IMR-90 (cell line): ENCODE measurements at regions of chr19 and their contacts with region 1.

Region 1: DNA sequence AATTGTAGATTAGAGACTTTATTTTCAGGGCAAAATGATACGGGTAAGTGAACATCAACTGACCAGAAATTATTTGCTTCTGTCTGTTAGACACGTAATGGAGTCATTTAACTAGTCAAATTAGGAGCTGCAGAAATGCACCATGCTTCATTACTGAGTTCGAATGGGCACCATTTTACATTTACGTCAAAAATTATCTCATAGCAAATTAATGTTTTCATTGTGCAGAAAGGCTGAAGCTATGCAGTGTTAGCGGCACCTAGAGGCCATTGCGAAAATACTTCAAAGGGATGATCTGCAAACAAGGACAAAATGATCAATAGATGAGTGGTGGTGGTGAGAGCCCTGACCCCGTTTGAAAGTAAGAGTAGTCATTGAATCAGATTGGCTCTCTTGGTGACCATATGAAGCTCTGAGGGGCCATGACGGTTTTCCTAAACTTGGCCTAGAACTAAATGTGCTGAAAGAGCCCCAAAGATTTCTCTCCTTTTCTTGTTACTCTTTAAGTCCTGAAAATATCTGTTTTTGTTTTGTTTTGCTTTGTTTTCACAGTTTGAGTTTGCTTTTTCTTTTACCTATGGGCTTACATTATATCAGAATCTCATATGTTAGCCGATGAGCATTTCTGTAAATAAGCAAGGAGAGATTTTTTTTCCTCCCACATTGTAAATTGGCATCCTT is 277.9 kb downstream of the ZNF536 start:
- DNase-seq: peak; percentile 51
- ATAC-seq: peak; percentile 71
- H3K4me3 ChIP-seq: no peak overlapping the region
- H3K27ac ChIP-seq: no peak overlapping the region
- H3K4me1 ChIP-seq: no peaks in the 10 kb centered on the region
- H3K27me3 ChIP-seq: no peaks in the 10 kb centered on the region
- CTCF ChIP-seq: peak; percentile 83
- POLR2A ChIP-seq: no peak
- RAD21 ChIP-seq: peak; percentile 82

Region 2: DNA sequence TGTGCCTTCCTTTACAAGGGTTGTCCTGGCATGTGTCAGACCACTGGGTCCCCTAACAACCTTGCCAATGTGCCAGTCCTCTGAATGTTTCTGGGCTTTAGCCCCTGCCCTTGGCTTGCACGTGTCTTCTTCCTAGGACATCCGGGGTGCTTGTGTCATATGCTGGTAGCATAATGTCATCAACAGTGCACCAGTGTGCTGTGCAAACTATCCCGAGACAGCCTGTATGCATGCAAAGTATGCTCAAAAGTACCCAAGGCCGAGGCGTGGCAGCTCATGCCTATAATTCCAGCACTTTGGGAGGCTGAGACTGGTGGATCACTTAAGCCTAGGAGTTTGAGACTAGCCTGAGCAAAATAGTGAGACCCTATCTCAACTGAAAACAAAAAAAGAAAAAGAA is 914.3 kb before region 1 on chr19:
- CTCF ChIA-PET with region 1: interaction called, 6 read pairs
- POLR2A ChIA-PET with region 1: no interaction called
- dilution Hi-C with region 1: no loop called
- in situ Hi-C with region 1: no loop called
- intact Hi-C with region 1: loop called (anchors 1 kb)
- DNase-seq: no peak
- ATAC-seq: no peak
- H3K4me3 ChIP-seq: no peak overlapping the region
- H3K27ac ChIP-seq: no peak overlapping the region
- H3K4me1 ChIP-seq: no peaks in the 10 kb centered on the region
- H3K27me3 ChIP-seq: peaks cover 14% of the 10 kb centered on the region
- CTCF ChIP-seq: no peak
- POLR2A ChIP-seq: no peak
- RAD21 ChIP-seq: no peak

Region 3: GRCh38 chr19:29771708-29772414 is 878.2 kb before region 1 on chr19:
- CTCF ChIA-PET with region 1: interaction called, 3 read pairs
- POLR2A ChIA-PET with region 1: no interaction called
- dilution Hi-C with region 1: no loop called
- in situ Hi-C with region 1: loop called (anchors 10 kb)
- intact Hi-C with region 1: loop called (anchors 1 kb)
- DNase-seq: peak; percentile 37
- ATAC-seq: peak; percentile 94
- H3K4me3 ChIP-seq: no peak overlapping the region
- H3K27ac ChIP-seq: no peak overlapping the region
- H3K4me1 ChIP-seq: no peaks in the 10 kb centered on the region; the same call in 1 of the 2 replicates
- H3K27me3 ChIP-seq: peaks cover 2% of the 10 kb centered on the region; the same call in 1 of the 2 replicates
- CTCF ChIP-seq: peak; percentile 70
- POLR2A ChIP-seq: no peak
- RAD21 ChIP-seq: peak; percentile 71

Region 4: DNA sequence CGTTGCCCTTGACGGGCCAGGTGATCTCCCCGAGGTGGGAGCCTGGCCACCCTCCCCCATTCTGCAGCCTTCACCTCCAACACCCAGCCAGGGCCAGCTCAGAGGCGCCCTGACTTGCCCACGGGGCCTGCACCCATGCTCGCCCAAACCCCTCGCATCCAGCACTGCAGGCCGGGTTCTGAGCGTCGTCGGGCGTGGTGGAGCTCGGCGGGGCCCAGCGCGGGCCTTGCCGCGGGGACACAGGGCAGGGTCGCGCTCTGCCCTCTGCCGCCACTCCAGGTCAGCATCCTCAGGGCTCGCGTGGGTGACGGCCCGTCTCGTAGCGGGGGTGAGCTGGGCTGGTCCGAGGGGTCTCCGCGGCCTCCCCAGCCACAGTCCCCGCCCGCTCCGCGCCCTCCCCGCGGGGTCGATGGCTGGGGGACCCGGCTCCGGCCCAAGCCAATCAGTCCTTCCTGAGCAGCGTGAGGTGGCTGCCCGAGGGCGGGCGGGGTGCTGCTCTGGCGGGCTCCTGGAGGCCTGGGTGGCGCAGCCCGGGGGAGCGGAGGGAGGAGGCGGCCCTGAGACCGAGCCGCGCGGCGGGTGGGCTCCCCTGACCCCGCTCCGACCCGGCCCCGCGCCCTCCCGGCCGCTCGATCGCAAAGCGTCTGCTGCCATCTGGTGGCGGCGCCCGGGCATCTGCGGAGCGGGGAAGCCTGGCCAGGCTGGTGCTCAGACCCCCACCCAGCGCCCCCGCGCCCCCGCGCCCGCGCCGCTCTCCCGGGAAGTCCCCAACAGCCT is 776.9 kb before region 1 on chr19:
- CTCF ChIA-PET with region 1: no interaction called
- POLR2A ChIA-PET with region 1: no interaction called
- dilution Hi-C with region 1: no loop called
- in situ Hi-C with region 1: loop called (anchors 25 kb)
- intact Hi-C with region 1: loop called (anchors 5 kb)
- DNase-seq: no peak
- ATAC-seq: peak; percentile 87
- H3K4me3 ChIP-seq: peak overlapping the region; percentile 20; the same call in 1 of the 2 replicates
- H3K27ac ChIP-seq: no peak overlapping the region
- H3K4me1 ChIP-seq: peaks cover 1% of the 10 kb centered on the region; the same call in 1 of the 2 replicates
- H3K27me3 ChIP-seq: peaks cover 3% of the 10 kb centered on the region; the same call in 1 of the 2 replicates
- CTCF ChIP-seq: peak; percentile 65
- POLR2A ChIP-seq: no peak
- RAD21 ChIP-seq: peak; percentile 67

Region 5: DNA sequence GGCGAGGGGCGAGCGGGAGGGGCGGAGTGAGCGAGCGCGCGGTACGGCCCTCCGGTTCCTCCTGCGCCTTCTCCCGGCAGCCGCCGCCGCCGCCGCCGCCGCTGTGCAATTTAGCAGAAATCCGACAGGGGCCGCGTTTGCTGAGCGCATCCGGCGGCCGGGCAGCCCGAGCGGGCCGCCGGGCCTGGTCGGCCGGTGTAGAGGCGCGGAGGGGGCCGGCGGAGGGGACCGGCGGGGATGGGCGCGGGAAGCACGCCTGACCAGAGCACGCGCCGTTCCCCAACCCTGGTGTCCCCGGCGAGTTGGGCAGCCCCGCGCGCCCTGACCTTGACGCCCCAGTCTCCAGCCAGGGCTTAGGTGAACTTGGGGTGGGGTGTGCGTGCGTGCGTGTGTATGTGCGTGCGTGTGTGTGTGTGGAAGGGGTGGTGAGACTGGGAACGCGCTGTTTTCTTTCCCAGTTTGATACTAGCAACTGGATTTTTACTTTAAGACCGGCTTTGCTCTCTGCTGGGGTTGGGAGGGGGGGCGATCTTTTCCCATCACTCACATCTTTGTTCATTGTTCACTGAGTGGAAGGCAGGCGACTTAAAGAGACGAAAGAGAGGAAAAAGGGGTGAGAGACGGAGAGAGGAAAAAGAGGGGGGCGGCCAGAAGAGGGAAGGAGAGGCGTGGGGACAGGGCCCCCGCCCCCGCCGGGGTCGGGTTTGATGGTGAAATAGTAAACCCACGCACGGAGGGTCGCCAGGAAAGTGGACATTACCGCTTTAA is 422.2 kb before region 1 on chr19:
- CTCF ChIA-PET with region 1: no interaction called
- POLR2A ChIA-PET with region 1: no interaction called
- dilution Hi-C with region 1: no loop called
- in situ Hi-C with region 1: no loop called
- intact Hi-C with region 1: loop called (anchors 10 kb)
- DNase-seq: peak; percentile 24
- ATAC-seq: peak; percentile 92
- H3K4me3 ChIP-seq: peak overlapping the region; percentile 51
- H3K27ac ChIP-seq: no peak overlapping the region
- H3K4me1 ChIP-seq: peaks cover 4% of the 10 kb centered on the region; the same call in 1 of the 2 replicates
- H3K27me3 ChIP-seq: peaks cover 60% of the 10 kb centered on the region
- CTCF ChIP-seq: peak; percentile 41
- POLR2A ChIP-seq: no peak
- RAD21 ChIP-seq: peak; percentile 12; the same call in 1 of the 2 replicates

Region 6: DNA sequence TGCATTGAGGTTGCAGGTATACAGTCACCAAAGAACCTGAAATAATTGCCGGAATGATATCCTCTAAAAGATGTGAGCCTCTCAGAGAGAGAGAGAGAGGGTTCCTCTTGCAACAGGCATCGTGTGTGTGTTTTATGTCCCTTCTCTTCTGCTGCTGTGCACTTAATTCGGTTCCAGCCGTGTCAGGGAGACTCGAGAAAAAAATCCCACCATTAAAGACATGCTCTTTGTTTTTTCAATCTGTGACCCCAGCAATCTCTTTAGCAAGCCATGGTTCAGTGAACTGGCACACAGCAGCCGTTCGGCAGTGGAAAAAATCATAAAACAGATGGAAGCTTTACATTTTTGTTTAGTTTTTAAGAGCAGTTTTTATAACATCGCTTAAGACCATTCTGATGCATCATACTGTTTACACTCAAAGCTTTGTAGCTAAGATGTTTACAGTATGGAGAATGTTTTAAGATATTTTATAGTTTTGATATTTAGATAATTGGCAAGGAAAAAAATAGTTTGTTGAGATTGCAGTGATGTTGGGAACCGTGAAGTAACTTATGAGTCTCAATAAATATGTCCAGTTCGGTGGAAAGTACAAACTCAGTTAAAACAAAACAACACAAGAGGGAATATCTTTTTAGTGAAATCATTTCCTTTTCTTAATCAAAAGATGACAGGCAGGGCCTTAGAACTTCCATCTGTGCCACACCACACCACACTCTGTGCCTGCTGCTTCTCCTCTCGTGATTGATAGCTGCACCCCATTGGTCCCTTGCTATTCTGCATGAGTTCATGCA is 309.1 kb before region 1 on chr19:
- CTCF ChIA-PET with region 1: no interaction called
- POLR2A ChIA-PET with region 1: no interaction called
- dilution Hi-C with region 1: no loop called
- in situ Hi-C with region 1: no loop called
- intact Hi-C with region 1: no loop called
- DNase-seq: no peak
- ATAC-seq: no peak
- H3K4me3 ChIP-seq: no peak overlapping the region
- H3K27ac ChIP-seq: no peak overlapping the region
- H3K4me1 ChIP-seq: no peaks in the 10 kb centered on the region
- H3K27me3 ChIP-seq: no peaks in the 10 kb centered on the region
- CTCF ChIP-seq: no peak
- POLR2A ChIP-seq: no peak
- RAD21 ChIP-seq: no peak

Region 7: DNA sequence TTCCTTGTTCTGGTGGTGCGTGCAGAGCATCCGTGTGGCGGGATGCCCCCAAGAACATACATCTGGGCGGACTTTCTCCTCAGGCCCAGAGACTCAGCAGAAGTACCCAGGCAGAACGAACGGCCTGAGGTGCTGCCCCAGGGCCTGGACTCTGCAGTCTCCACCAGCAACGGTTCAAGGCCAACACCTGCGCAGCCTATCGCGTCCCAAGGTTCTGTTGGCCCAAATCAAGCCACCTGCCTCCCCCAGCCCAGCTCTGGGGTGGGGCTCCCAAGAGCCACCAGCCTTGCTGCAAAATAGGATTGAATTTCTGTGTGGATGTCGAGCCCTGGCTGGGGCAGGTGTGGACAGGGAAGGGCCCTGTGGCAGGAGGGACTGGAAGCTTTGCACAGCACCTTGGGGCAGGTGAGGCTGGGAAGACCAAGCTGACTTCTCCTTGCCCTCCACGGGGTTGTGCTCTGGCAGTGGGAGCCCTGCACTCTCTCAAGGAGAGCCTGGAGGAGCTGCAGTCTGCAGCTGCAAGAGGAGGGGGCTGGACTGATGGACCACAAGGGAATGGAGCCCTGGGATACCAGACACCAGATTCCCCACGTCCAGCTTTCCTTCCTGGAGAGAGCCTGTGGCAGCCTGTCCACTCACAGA is 131.0 kb before region 1 on chr19:
- CTCF ChIA-PET with region 1: no interaction called
- POLR2A ChIA-PET with region 1: no interaction called
- dilution Hi-C with region 1: no loop called
- in situ Hi-C with region 1: no loop called
- intact Hi-C with region 1: no loop called
- DNase-seq: no peak
- ATAC-seq: no peak
- H3K4me3 ChIP-seq: no peak overlapping the region
- H3K27ac ChIP-seq: no peak overlapping the region
- H3K4me1 ChIP-seq: no peaks in the 10 kb centered on the region
- H3K27me3 ChIP-seq: no peaks in the 10 kb centered on the region
- CTCF ChIP-seq: no peak
- POLR2A ChIP-seq: no peak
- RAD21 ChIP-seq: no peak

Region 8: DNA sequence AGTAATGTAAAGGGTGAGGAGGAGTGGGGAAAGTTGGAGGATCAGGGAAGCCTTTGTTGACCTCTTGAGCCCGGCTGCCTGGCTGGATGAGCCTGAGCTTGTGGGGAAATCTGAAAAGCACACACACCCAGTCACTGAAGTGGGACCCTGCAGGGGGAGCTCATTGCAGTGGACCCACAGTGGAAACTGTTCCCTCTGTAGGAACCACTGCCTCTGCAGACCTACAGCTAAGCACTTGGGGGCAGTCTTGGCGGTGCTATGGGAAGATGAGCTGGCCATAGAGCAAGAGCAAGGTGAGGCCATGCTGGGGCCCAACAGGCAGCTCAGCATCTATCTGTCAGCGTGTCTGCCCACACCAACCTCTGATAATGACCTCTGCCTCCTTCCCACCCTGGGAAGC is 404.4 kb after region 1 on chr19:
- CTCF ChIA-PET with region 1: no interaction called
- POLR2A ChIA-PET with region 1: no interaction called
- dilution Hi-C with region 1: no loop called
- in situ Hi-C with region 1: no loop called
- intact Hi-C with region 1: no loop called
- DNase-seq: peak; percentile 83
- ATAC-seq: peak; percentile 98
- H3K4me3 ChIP-seq: no peak overlapping the region
- H3K27ac ChIP-seq: no peak overlapping the region
- H3K4me1 ChIP-seq: no peaks in the 10 kb centered on the region
- H3K27me3 ChIP-seq: peaks cover 5% of the 10 kb centered on the region
- CTCF ChIP-seq: peak; percentile 95
- POLR2A ChIP-seq: no peak
- RAD21 ChIP-seq: peak; percentile 97